IMR-90 (cell line): ENCODE measurements at regions of chr15 and their contacts with region 1.

Region 1: GRCh38 chr15:75666823-75667501 is 19.2 kb downstream of the SNX33 start:
- DNase-seq: peak; percentile 100
- ATAC-seq: peak; percentile 87
- H3K4me3 ChIP-seq: no peak overlapping the region
- H3K27ac ChIP-seq: peak overlapping the region; percentile 87
- H3K4me1 ChIP-seq: peaks cover 34% of the 10 kb centered on the region
- H3K27me3 ChIP-seq: no peaks in the 10 kb centered on the region
- CTCF ChIP-seq: no peak
- POLR2A ChIP-seq: no peak
- RAD21 ChIP-seq: no peak

Region 2: DNA sequence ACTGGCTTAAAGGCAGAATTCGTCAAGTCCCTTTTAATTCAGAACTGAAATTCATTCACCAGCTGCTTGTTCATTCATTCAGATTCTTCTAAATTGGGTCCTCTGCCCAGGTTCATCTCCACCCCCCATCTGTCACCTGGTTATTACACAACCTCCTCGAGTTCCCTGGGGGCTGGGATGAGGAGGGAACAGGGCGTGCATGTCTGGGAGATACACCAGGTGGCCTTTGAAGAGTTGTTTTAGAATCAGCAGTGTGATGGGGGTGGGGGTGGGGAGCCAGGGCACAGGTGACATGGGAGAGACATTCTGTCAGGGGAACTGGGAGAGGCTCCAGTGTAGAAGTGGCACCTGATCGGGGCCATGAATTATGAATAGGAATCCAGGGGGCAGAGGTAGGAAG is 11.0 kb before region 1 on chr15:
- CTCF ChIA-PET with region 1: no interaction called
- POLR2A ChIA-PET with region 1: no interaction called
- dilution Hi-C with region 1: no loop called
- in situ Hi-C with region 1: no loop called
- intact Hi-C with region 1: no loop called
- DNase-seq: no peak
- ATAC-seq: no peak
- H3K4me3 ChIP-seq: no peak overlapping the region
- H3K27ac ChIP-seq: no peak overlapping the region
- H3K4me1 ChIP-seq: peaks cover 35% of the 10 kb centered on the region
- H3K27me3 ChIP-seq: no peaks in the 10 kb centered on the region
- CTCF ChIP-seq: no peak
- POLR2A ChIP-seq: no peak
- RAD21 ChIP-seq: no peak

Region 3: DNA sequence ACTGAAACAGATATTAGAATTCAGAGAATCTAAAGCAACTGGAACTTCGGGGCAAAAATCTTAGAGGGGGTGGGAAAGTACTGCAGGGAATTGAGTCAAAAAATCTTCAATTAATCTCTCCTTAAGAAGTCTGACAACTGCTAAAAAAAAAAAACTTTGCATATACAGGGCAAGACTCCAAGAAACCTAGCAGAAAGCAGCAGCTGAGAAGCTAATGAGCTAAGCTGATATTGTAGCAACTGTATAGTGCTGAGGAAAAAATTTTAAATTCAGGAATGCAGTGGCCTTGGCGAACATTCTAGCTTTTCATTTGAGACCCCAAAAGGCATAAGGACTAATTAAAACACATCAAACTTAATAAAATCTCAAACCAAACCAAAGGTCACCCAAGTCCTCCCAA is 1124.5 kb after region 1 on chr15:
- CTCF ChIA-PET with region 1: no interaction called
- POLR2A ChIA-PET with region 1: interaction called, 12 read pairs
- dilution Hi-C with region 1: no loop called
- in situ Hi-C with region 1: no loop called
- intact Hi-C with region 1: no loop called
- DNase-seq: no peak
- ATAC-seq: no peak
- H3K4me3 ChIP-seq: no peak overlapping the region
- H3K27ac ChIP-seq: no peak overlapping the region
- H3K4me1 ChIP-seq: no peaks in the 10 kb centered on the region
- H3K27me3 ChIP-seq: no peaks in the 10 kb centered on the region
- CTCF ChIP-seq: no peak
- POLR2A ChIP-seq: no peak
- RAD21 ChIP-seq: no peak